Caco-2 (cell line): ENCODE measurements at regions of chr17 and their contacts with region 1.

Region 1: GRCh38 chr17:17919169-17920107 is 52.8 kb downstream of the TOM1L2 start:
- DNase-seq: peak; percentile 87 to 90
- H3K4me3 ChIP-seq: no peak overlapping the region
- H3K4me3 Mint-ChIP-seq: no peak overlapping the region
- H3K27ac Mint-ChIP-seq: peak overlapping the region; percentile 79
- H3K4me1 ChIP-seq: peaks cover 58% of the 10 kb centered on the region
- H3K4me1 Mint-ChIP-seq: peaks cover 31% of the 10 kb centered on the region
- H3K27me3 ChIP-seq: no peaks in the 10 kb centered on the region
- H3K27me3 Mint-ChIP-seq: no peaks in the 10 kb centered on the region
- CTCF ChIP-seq: peak; percentile 71 to 98

Region 2: GRCh38 chr17:17836250-17836817 is 83.1 kb before region 1 on chr17:
- CTCF ChIA-PET with region 1: interaction called, 8 read pairs
- POLR2A ChIA-PET with region 1: interaction called, 10 read pairs
- intact Hi-C with region 1: no loop called
- DNase-seq: peak; percentile 98 to 99
- H3K4me3 ChIP-seq: peak overlapping the region; percentile 98
- H3K4me3 Mint-ChIP-seq: peak overlapping the region; percentile 82
- H3K27ac Mint-ChIP-seq: peak overlapping the region; percentile 98
- H3K4me1 ChIP-seq: peaks cover 46% of the 10 kb centered on the region
- H3K4me1 Mint-ChIP-seq: peaks cover 38% of the 10 kb centered on the region
- H3K27me3 ChIP-seq: no peaks in the 10 kb centered on the region
- H3K27me3 Mint-ChIP-seq: no peaks in the 10 kb centered on the region
- CTCF ChIP-seq: no peak

Region 3: GRCh38 chr17:17890773-17891759 is 28.4 kb before region 1 on chr17:
- CTCF ChIA-PET with region 1: interaction called, 92 read pairs
- POLR2A ChIA-PET with region 1: interaction called, 9 read pairs
- intact Hi-C with region 1: loop called (anchors 1 kb)
- DNase-seq: peak; percentile 78 to 81
- H3K4me3 ChIP-seq: no peak overlapping the region
- H3K4me3 Mint-ChIP-seq: no peak overlapping the region
- H3K27ac Mint-ChIP-seq: no peak overlapping the region
- H3K4me1 ChIP-seq: no peaks in the 10 kb centered on the region; the same call in 1 of the 2 replicates
- H3K4me1 Mint-ChIP-seq: peaks cover 5% of the 10 kb centered on the region
- H3K27me3 ChIP-seq: no peaks in the 10 kb centered on the region
- H3K27me3 Mint-ChIP-seq: no peaks in the 10 kb centered on the region
- CTCF ChIP-seq: peak; percentile 89 to 97

Region 4: GRCh38 chr17:17935321-17936271 is 16.2 kb after region 1 on chr17:
- CTCF ChIA-PET with region 1: interaction called, 18 read pairs
- POLR2A ChIA-PET with region 1: interaction called, 12 read pairs
- intact Hi-C with region 1: loop called (anchors 1 kb)
- DNase-seq: peak; percentile 77 to 88
- H3K4me3 ChIP-seq: no peak overlapping the region
- H3K4me3 Mint-ChIP-seq: peak overlapping the region; percentile 18
- H3K27ac Mint-ChIP-seq: peak overlapping the region; percentile 21
- H3K4me1 ChIP-seq: peaks cover 63% of the 10 kb centered on the region
- H3K4me1 Mint-ChIP-seq: peaks cover 46% of the 10 kb centered on the region
- H3K27me3 ChIP-seq: no peaks in the 10 kb centered on the region
- H3K27me3 Mint-ChIP-seq: no peaks in the 10 kb centered on the region
- CTCF ChIP-seq: no peak

Region 5: GRCh38 chr17:17972126-17972951 is 52.9 kb after region 1 on chr17 and contains the starts of genes DRC3 and TOM1L2:
- CTCF ChIA-PET with region 1: interaction called, 22 read pairs
- POLR2A ChIA-PET with region 1: interaction called, 15 read pairs
- intact Hi-C with region 1: loop called (anchors 2 kb)
- DNase-seq: peak; percentile 100
- H3K4me3 ChIP-seq: peak within 1 kb of the TSS; percentile 64
- H3K4me3 Mint-ChIP-seq: peak within 1 kb of the TSS; percentile 84
- H3K27ac Mint-ChIP-seq: peak within 1 kb of the TSS; percentile 93
- H3K4me1 ChIP-seq: peaks cover 13% of the 10 kb centered on the region
- H3K4me1 Mint-ChIP-seq: peaks cover 20% of the 10 kb centered on the region
- H3K27me3 ChIP-seq: no peaks in the 10 kb centered on the region
- H3K27me3 Mint-ChIP-seq: no peaks in the 10 kb centered on the region
- CTCF ChIP-seq: peak in 1 of 2 experiments; percentile 14
- total RNA-seq, gene DRC3: 1.6 and 2.1 TPM in 2 replicates
- total RNA-seq, gene TOM1L2: 35.5 and 43.3 TPM in 2 replicates